ENCODE measurements at regions of chr2 and their contacts with region 1.

Region 1: DNA sequence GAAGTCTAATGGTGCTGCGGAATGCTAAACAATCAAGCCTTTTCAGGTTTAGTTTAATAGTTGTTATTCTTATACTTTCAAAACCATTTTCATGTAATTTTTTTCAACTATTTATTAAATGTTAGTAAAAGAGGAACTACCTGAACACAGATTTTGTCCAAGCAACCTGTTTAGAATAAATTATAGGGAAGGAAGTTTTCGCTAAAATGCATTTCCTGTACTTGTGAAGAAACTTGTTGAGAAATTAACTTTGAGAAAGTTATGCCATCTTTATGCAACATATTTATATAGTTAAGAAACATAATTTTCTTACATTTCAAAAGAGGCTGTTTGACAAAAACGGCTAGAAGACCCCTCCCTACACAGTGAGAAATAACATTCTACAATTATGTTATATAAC is 16.6 kb downstream of the MAP4K4 start:
- DNase-seq: no peak
- ATAC-seq: no peak

Region 2: DNA sequence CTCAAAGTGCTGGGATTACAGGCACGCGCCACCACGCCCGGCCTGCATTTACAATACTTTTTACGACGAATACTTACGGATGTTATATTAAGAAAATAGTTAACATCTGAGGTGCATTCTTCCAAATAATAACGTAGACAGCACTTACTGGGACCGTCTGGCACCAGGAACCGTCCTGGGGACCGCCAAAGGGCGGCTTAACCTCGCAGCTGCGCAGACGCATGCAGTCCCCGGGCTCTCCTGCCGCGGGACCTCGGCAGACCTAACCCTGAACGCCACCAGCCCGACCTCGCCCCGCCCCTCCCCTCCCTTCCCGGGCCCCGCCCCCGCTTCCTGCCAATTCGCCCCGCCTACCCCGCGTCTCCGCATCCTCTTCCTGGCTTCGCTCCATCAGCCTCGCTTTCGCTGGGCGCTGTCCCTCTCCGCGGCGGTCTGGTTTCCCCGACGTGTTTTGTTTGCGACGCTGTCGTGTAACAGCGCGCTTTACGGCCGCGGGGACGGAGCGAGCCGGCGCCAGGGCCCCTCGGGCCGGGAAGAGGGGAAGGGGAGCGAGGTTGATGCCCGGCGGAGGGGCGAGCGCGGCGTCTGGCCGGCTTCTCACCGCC is 461.6 kb before region 1 on chr2 and contains the start of gene CNOT11:
- intact Hi-C with region 1: no loop called
- DNase-seq: peak; percentile 100
- ATAC-seq: peak; percentile 95 to 96
- total RNA-seq, gene CNOT11: 29.8 to 34.0 TPM

Region 3: GRCh38 chr2:101551336-101551888 is 162.7 kb before region 1 on chr2:
- intact Hi-C with region 1: no loop called
- DNase-seq: no peak
- ATAC-seq: no peak

Region 4: DNA sequence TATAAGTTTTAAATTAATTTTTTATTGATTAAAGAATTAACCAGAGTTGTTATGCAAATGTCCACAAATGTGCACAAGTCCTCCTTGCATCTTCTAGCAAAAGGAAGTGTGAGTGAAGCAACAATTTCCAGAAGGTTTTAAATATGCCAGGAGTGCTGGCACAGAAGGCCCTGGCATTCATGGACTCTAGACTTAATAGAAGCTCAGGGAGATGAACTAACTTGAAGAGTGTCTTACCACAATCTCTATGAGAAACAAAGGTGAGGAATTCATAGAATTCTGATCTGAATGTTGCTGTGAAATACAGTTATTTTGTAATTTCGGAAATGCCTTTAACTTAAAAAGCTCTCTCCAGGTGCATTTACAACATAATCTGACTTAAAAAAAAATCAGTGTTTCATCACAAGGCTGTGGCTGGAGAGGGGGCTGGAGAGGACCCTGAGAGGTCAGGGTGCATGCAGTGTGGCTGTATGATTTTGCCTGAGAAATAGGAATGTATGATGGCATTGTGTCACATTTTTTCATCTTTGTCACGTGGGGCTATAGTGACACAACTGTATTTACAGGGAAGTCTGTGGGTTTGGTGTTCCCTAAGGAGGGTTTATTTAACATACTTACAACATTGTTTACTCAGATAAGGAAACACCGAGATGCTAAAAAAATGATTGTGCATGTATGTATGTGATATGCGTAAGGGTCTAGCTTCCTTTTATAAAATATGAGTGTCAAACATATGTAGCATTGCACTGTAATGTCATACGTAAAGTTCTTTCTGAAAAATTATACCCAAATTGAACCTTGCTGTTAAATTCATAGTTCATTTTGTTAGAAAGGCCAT is 49.6 kb after region 1 on chr2:
- intact Hi-C with region 1: loop called in 1 of 2 experiments (anchors 2 kb)
- DNase-seq: no peak
- ATAC-seq: peak in 1 of 2 donors; percentile 8

Measured in left cardiac atrium (tissue), 4 donors.